SK-N-SH (cell line): ENCODE measurements at regions of chr17 and their contacts with region 1.

Region 1: DNA sequence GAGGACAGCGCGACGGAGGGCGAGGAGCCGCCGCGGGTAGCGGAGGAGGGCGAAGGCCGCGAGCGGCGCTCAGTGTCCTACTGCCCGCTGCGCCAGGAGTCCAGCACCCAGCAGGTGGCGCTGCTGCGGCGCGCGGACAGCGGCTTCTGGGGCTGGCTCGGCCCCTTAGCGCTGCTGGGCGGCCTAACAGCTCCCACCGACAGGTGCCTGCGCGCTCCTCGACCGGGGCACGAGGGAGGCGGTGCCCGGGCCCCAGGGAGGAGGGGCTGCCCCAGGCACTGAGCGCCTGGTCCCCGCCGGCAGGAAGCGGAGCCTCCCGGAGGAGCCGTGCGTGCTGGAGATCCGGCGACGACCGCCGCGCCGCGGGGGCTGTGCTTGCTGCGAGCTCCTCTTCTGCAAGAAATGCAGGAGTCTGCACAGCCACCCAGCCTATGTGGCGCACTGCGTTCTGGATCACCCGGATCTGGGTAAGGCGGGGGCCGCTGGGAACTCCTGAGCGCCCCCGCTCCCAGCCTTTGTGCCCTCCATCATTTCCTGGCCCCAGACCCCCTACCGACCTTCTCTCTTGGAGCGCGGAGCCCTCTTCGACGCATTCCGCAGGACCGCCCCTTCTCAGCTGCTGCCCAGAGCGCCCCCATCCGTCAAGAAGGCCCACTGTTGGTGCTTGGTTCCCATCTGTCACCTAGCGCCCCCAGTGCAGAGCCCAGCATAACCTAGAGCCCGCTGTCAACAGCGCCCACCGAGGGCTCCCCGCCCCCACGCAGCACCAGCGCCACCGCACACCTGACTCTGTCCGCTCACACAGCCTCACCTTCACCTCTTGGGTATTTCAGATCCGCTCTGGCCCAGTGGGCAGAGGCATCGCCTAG is 3.7 kb downstream of the C17orf50 start:
- DNase-seq: peak; percentile 98
- H3K4me3 ChIP-seq: peak overlapping the region; percentile 56
- H3K27ac ChIP-seq: peak overlapping the region in 1 of 2 experiments; percentile 77; a peak in 2 of 4 replicates
- H3K4me1 ChIP-seq: peaks cover 0 to 15% of the 10 kb centered on the region in 2 experiments; a peak in 1 of 4 replicates
- H3K27me3 ChIP-seq: no peaks in the 10 kb centered on the region
- CTCF ChIP-seq: peak; percentile 62
- EP300 ChIP-seq: no peak
- RAD21 ChIP-seq: peak; percentile 86

Region 2: GRCh38 chr17:35596530-35597233 is 167.7 kb before region 1 on chr17:
- CTCF ChIA-PET with region 1: interaction called, 11 read pairs
- POLR2A ChIA-PET with region 1: no interaction called
- DNase-seq: peak; percentile 26
- H3K4me3 ChIP-seq: no peak overlapping the region
- H3K27ac ChIP-seq: no peak overlapping the region
- H3K4me1 ChIP-seq: no peaks in the 10 kb centered on the region
- H3K27me3 ChIP-seq: no peaks in the 10 kb centered on the region
- CTCF ChIP-seq: peak; percentile 18; the same call in 1 of the 2 replicates
- EP300 ChIP-seq: no peak
- RAD21 ChIP-seq: no peak

Region 3: GRCh38 chr17:35630530-35631148 is 133.7 kb before region 1 on chr17:
- CTCF ChIA-PET with region 1: interaction called, 10 read pairs
- POLR2A ChIA-PET with region 1: no interaction called
- DNase-seq: no peak
- H3K4me3 ChIP-seq: no peak overlapping the region
- H3K27ac ChIP-seq: peak overlapping the region in 1 of 2 experiments; percentile 60; a peak in 2 of 4 replicates
- H3K4me1 ChIP-seq: 0 out of 4 replicates have a peak, but pooled peaks cover 0 to 5% of the 10 kb centered on the region in 2 experiments
- H3K27me3 ChIP-seq: no peaks in the 10 kb centered on the region
- CTCF ChIP-seq: no peak
- EP300 ChIP-seq: no peak
- RAD21 ChIP-seq: no peak

Region 4: DNA sequence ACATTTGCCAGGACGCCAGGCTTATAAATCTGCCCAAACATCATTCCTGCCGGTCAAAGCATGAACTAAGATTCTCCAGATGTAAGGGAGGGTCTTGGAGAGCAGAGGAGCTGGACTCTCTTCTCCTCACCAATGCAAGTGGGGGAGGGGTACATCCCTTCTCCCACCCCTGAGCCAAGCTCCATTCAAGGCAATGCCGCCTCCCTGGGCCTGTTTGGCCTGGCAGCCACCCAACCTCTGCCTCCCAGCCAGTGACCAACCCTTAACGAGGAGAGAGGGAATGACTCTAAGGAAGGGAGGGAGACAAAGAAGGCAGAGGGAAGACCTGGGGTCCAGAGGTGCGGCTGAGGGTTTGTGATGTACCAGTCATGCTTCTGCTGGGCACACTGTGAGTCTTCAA is 10.1 kb after region 1 on chr17:
- CTCF ChIA-PET with region 1: interaction called, 203 read pairs
- POLR2A ChIA-PET with region 1: interaction called, 7 read pairs
- DNase-seq: peak; percentile 85
- H3K4me3 ChIP-seq: no peak overlapping the region
- H3K27ac ChIP-seq: peak overlapping the region in 1 of 2 experiments; percentile 80; a peak in 2 of 4 replicates
- H3K4me1 ChIP-seq: peaks cover 0 to 26% of the 10 kb centered on the region in 2 experiments; a peak in 1 of 4 replicates
- H3K27me3 ChIP-seq: no peaks in the 10 kb centered on the region
- CTCF ChIP-seq: no peak
- EP300 ChIP-seq: no peak
- RAD21 ChIP-seq: no peak

Region 5: DNA sequence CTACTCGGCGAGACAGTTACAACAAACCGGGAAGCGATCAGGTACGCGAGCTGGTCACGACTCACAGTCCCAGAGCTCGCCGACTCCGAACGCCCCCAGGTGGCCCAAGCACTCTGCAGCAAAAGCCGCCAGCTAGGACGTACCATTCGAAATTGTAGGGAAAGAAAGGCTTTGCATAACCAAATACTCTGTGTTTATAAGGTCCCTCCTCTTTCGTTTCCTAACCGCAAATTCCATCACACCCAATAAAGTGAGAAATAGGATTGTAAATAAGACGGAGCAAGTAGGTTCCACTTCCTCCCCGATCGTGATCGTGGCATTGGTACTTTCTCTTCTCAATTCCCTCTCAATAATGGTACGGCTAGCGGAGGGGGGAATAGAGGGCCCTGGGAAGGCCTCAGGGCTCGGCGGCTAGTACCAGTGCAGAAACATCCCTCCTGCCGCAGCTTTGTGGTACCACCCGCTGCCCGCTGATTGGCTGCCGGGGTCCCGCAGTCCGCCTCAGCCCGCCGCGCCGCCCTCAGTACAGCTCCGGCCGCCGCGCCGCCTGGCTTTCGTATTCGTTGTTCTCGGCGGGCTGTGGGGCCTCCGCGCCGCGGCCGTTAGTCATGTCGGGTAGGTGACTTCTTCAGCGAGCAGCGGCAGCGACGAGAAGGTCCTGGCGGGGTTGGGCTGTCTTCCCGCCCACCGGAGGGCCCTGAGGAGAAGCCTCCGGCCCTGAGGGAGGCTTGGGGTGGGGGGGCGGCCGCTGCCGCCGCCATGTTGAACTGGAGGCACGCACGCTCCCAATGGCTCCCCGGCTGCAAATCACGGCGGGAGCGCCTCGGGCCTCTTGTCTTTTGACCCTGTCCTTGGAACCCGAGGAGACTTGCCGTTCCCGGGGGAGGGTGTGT is 44.9 kb after region 1 on chr17 and contains the start of gene TAF15:
- CTCF ChIA-PET with region 1: interaction called, 809 read pairs
- POLR2A ChIA-PET with region 1: interaction called, 65 read pairs
- DNase-seq: peak; percentile 95
- H3K4me3 ChIP-seq: peak within 1 kb of the TSS; percentile 77 to 80
- H3K27ac ChIP-seq: peak within 1 kb of the TSS; percentile 75 to 99
- H3K4me1 ChIP-seq: peaks cover 0 to 21% of the 10 kb centered on the region in 2 experiments; a peak in 3 of 4 replicates
- H3K27me3 ChIP-seq: no peaks in the 10 kb centered on the region
- CTCF ChIP-seq: peak; percentile 78
- EP300 ChIP-seq: peak in 1 of 2 experiments; percentile 25; a peak in 1 of 4 replicates
- RAD21 ChIP-seq: peak; percentile 52
- polyA plus RNA-seq, gene TAF15: 67.5 and 78.0 TPM in 2 replicates